Gastrocnemius medialis (tissue), 4 donors: ENCODE measurements at regions of chr5 and their contacts with region 1.

Region 1: GRCh38 chr5:112160652-112161391 is 258.3 kb downstream of the EPB41L4A start:
- DNase-seq: peak; percentile 80 to 86
- ATAC-seq: peak; percentile 93 to 96
- H3K4me3 ChIP-seq: peak overlapping the region; percentile 91 to 96 (median 96)
- H3K27ac ChIP-seq: peak overlapping the region; percentile 89 to 93 (median 90)
- H3K4me1 ChIP-seq: peaks cover 14 to 23% of the 10 kb centered on the region in 2 donors
- H3K27me3 ChIP-seq: no peaks in the 10 kb centered on the region
- CTCF ChIP-seq: peak; percentile 91 to 98 (median 94)
- POLR2A ChIP-seq: peak; percentile 84 to 88

Region 2: DNA sequence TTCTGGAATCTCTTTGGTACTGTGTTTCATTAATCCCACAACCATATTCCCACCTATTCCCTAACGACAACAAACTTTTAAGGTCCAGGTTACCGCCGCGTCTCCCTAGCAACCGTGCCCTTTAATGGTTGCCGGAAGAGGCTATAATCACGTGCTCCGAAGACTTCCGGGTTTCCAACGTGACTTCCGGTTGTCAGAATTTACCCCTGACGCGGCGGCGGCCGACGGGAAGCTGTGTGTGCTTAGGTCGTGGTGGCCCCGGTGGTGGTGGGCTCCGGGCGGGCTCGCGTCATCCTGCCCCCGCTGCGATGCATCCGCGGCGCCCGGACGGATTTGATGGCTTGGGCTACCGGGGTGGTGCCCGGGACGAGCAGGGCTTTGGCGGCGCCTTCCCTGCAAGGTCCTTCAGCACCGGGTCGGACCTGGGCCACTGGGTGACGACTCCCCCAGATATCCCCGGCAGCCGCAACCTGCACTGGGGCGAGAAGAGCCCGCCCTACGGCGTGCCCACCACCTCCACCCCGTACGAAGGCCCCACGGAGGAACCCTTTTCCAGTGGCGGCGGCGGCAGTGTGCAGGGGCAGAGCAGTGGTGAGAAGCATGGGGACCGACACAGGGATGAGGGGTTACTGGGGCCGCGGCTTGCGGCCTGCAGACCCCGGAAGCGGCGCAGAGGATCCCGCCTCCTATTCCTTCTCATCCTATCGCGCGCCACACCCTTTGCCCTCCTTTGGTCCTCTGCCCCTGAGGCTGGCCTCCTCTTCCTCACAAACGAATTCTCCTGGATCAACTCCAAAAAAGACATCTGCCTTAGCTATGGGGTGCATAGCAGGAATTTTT is 1421.8 kb before region 1 on chr5 and contains the start of gene SLC25A46:
- in situ Hi-C with region 1: loop called in 1 of 4 experiments (anchors 25 kb)
- intact Hi-C with region 1: no loop called
- DNase-seq: peak; percentile 70 to 81
- ATAC-seq: peak; percentile 99 to 100
- H3K4me3 ChIP-seq: peak within 1 kb of the TSS; percentile 83 to 100 (median 95)
- H3K27ac ChIP-seq: peak within 1 kb of the TSS; percentile 88 to 93 (median 91)
- H3K4me1 ChIP-seq: peaks cover 10 to 16% of the 10 kb centered on the region in 2 donors
- H3K27me3 ChIP-seq: peaks cover 0 to 2% (median 0%) of the 10 kb centered on the region in 3 donors
- CTCF ChIP-seq: no peak
- POLR2A ChIP-seq: peak; percentile 46 to 60
- total RNA-seq, gene SLC25A46: 71.5 to 114 (median 99.7) TPM

Region 3: DNA sequence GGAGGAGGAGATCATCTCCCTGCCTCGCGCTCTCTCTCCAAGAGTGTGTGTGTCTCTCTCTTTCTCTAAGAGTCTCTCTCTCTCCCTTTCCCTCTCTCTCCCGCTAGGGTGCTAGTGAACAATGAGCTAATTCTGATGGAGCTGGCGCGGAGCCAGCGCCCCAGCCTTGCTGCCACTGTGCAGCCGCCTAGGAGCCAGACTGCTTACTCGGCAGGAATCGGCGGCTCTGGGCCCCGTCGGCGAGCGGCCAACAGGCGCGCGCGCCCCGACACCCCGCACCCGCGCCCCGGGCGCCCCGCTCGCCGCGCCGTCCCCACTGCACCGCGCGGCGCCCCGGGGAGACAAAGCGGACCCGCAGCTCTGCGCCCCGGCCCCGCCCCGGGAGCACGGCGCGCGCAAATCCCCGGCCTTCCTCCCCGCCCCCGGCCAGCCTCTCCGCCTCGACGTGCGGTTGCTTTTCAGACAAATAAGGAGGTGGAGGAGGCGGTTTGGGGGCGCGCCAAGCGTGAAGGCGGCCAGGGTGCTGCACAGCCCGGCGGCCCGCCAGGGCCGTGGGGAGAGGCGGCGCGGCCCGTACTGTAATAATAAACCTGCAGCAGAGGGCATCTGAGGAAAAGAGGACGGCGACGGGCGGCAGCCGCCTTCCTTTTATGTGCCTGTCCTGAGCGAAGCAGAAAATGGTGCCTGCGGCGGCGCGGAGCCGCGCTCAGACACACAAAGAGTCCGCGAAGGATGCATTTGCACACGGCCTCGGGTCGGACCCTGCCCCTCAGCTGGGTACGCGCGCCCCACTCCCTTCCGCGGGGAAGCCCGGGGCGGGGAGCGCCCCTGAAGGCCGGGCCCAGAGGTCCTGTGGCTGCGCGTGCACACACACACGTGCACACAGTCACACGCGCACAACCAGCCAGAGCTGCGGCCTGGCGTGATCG is 403.2 kb before region 1 on chr5:
- in situ Hi-C with region 1: no loop called
- intact Hi-C with region 1: loop called (anchors 5 kb)
- DNase-seq: peak; percentile 90 to 95
- ATAC-seq: peak; percentile 72 to 76
- H3K4me3 ChIP-seq: peak overlapping the region; percentile 49 to 75 (median 64)
- H3K27ac ChIP-seq: peak overlapping the region; percentile 74 to 94 (median 90)
- H3K4me1 ChIP-seq: peaks cover 37 to 43% of the 10 kb centered on the region in 2 donors
- H3K27me3 ChIP-seq: no peaks in the 10 kb centered on the region
- CTCF ChIP-seq: peak; percentile 16 to 39 (median 30)
- POLR2A ChIP-seq: peak; percentile 56 to 82

Region 4: GRCh38 chr5:112419986-112420864 is 259.4 kb after region 1 on chr5:
- in situ Hi-C with region 1: no loop called
- intact Hi-C with region 1: loop called (anchors 5 kb)
- DNase-seq: peak; percentile 59 to 63
- ATAC-seq: peak; percentile 88 to 89
- H3K4me3 ChIP-seq: peak overlapping the region; percentile 72 to 94 (median 74)
- H3K27ac ChIP-seq: peak overlapping the region; percentile 61 to 80 (median 75)
- H3K4me1 ChIP-seq: no peaks in the 10 kb centered on the region
- H3K27me3 ChIP-seq: peaks cover 17 to 32% (median 31%) of the 10 kb centered on the region in 3 donors
- CTCF ChIP-seq: peak; percentile 57 to 92 (median 86)
- POLR2A ChIP-seq: no peak

Region 5: DNA sequence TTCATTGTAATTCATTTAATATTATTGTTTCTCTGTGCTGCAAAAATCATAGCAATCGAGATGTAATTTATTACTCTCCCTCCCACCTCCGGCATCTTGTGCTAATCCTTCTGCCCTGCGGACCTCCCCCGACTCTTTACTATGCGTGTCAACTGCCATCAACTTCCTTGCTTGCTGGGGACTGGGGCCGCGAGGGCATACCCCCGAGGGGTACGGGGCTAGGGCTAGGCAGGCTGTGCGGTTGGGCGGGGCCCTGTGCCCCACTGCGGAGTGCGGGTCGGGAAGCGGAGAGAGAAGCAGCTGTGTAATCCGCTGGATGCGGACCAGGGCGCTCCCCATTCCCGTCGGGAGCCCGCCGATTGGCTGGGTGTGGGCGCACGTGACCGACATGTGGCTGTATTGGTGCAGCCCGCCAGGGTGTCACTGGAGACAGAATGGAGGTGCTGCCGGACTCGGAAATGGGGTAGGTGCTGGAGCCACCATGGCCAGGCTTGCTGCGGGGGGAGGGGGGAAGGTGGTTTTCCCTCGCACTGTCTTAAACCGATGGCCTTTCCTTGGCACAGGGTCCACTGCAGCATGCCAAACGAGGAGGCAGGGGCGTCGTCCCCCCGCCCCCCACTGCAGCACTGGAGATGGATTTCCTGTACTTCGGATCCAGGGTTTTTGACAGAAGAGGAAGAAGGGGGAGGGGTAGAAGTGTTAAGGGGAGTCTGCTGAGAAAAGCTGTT is 576.8 kb after region 1 on chr5 and contains the start of gene APC:
- in situ Hi-C with region 1: loop called in 1 of 4 experiments (anchors 25 kb)
- intact Hi-C with region 1: no loop called
- DNase-seq: peak; percentile 82 to 93
- ATAC-seq: peak; percentile 94 to 98
- H3K4me3 ChIP-seq: peak within 1 kb of the TSS; percentile 68 to 85 (median 72)
- H3K27ac ChIP-seq: peak within 1 kb of the TSS; percentile 59 to 78 (median 73)
- H3K4me1 ChIP-seq: peaks cover 24 to 27% of the 10 kb centered on the region in 2 donors
- H3K27me3 ChIP-seq: no peaks in the 10 kb centered on the region
- CTCF ChIP-seq: peak in 2 of 5 experiments; percentile 9 to 10
- POLR2A ChIP-seq: peak in 1 of 2 donors; percentile 37
- total RNA-seq, gene APC: 50.1 to 102 (median 60.4) TPM